Caco-2 (cell line): ENCODE measurements at regions of chrX and their contacts with region 1.

Region 1: DNA sequence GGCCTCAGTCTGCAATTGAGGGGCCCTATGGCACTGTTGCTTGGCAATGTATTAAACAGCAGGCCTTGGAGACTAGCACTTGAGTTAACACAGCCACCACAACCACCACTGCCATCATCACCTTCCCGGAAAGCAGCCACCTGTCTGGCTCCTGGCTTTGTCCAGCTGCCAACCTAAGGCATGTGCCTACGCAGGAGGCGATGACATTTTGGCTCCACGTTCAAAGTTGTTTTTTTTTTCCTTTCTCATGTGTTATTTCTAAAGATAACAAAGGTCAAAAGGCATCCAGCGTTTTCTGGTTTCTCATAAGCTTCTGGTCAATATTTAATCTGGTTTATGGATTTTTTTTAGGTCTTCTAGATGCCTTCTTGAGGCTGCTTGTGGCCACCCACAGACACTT is 7.5 kb downstream of the CLDN2 start:
- DNase-seq: no peak
- H3K4me3 ChIP-seq: no peak overlapping the region
- H3K4me3 Mint-ChIP-seq: no peak overlapping the region
- H3K27ac Mint-ChIP-seq: peak overlapping the region; percentile 22
- H3K4me1 ChIP-seq: peaks cover 45% of the 10 kb centered on the region
- H3K4me1 Mint-ChIP-seq: peaks cover 6% of the 10 kb centered on the region
- H3K27me3 ChIP-seq: no peaks in the 10 kb centered on the region
- H3K27me3 Mint-ChIP-seq: no peaks in the 10 kb centered on the region
- CTCF ChIP-seq: no peak

Region 2: DNA sequence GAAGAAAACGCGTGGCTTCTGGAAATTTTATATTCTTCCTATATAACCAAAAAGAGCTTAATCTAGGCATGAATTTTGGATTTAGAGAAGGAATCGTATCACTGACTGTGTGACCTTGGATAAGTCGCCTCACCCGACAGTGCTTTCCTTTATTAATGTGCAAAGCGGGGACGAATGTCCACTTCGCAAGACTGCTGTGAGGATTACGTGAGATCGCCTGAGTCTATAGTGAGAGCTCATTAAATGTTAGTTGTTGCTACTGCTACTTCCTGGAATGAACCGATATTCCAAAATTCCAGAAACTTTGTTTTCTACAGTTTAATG is 125.7 kb before region 1 on chrX:
- CTCF ChIA-PET with region 1: no interaction called
- POLR2A ChIA-PET with region 1: no interaction called
- intact Hi-C with region 1: no loop called
- DNase-seq: peak in 1 of 2 experiments; percentile 29
- H3K4me3 ChIP-seq: peak overlapping the region; percentile 38
- H3K4me3 Mint-ChIP-seq: peak overlapping the region; percentile 91
- H3K27ac Mint-ChIP-seq: peak overlapping the region; percentile 86
- H3K4me1 ChIP-seq: no peaks in the 10 kb centered on the region
- H3K4me1 Mint-ChIP-seq: peaks cover 7% of the 10 kb centered on the region
- H3K27me3 ChIP-seq: no peaks in the 10 kb centered on the region
- H3K27me3 Mint-ChIP-seq: no peaks in the 10 kb centered on the region
- CTCF ChIP-seq: no peak

Region 3: DNA sequence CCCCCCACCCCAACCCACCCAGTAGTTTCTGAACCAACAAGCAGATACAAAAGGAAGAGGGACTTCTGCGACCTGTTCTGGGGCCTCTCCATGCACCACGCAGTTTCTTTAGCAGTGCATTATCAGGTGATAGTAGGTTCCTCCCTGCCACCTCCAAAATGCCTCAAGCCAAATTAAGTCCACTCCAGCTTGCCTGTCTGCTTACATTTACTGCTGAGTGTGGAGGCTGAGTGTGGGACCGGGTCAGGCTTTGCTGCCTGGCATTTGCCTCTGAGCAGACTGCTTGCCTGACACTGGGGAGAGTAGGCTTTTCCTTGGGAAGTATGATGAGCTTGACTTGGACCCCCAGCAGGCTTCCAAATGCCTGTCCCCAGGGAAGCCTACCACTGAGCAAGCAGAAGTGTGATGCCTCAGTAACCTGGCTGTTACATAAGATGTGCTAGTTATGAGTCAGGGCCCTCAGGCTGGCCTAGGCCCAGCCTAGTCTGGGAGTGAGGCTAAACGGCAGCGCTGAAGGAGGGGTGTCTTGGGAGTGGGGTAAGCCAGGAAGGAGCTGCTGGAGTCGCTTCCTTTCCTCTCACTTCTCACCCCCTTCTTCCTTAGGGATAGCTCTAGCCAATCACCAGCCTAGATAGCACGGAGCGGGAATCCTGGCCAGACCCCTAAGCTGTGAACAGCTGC is 838.9 kb after region 1 on chrX:
- CTCF ChIA-PET with region 1: interaction called, 10 read pairs
- POLR2A ChIA-PET with region 1: no interaction called
- intact Hi-C with region 1: no loop called
- DNase-seq: no peak
- H3K4me3 ChIP-seq: no peak overlapping the region
- H3K4me3 Mint-ChIP-seq: no peak overlapping the region
- H3K27ac Mint-ChIP-seq: no peak overlapping the region
- H3K4me1 ChIP-seq: no peaks in the 10 kb centered on the region
- H3K4me1 Mint-ChIP-seq: no peaks in the 10 kb centered on the region
- H3K27me3 ChIP-seq: no peaks in the 10 kb centered on the region
- H3K27me3 Mint-ChIP-seq: peaks cover 5% of the 10 kb centered on the region
- CTCF ChIP-seq: no peak